CD8-positive, alpha-beta memory T cell (primary cell): ENCODE measurements at regions of chr10 and their contacts with region 1.

Region 1: DNA sequence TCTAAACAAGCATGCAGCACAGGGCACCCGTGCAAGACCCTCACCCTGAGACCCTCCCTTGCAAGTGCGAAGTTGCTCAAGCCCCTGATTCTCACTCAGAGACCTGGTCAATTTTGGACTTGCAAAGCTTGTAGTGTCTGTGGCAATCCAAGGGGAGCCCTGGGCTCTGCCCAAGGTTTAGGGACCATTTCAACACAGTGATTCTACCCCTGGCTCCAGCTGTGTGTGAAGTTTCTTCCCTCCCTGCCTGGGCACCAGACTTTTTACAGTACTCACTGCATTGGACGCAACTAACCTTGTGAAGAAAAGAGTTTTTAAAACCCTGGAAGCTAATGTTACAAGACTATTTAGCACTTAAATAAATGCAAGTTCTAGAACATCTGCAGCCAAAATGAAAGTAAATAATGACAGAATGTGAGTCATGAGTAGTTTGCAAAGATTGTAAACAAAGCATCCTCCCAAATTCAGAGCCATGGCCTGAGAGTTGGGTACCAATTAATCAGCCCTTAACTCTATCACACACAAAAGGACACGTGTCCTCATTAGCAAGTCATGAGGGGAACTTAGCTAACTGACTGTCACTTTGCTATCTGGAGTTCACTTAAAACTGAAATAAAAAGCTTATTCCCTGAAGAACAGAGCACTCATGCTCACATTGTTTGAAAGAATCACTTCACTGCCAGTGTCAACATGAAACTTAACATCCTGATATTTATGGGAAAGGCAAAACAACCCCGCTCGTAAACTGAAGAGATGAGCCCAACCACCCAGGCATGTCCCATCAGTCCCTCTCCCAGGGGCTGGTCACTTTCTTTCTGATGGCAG is 48.1 kb downstream of the RGS10 start:
- DNase-seq: no peak
- H3K4me3 ChIP-seq: no peak overlapping the region
- H3K4me3 Mint-ChIP-seq: peak overlapping the region in 5 of 7 donors; percentile 10 to 52 (median 24)
- H3K27ac ChIP-seq: no peak overlapping the region
- H3K27ac Mint-ChIP-seq: peak overlapping the region; percentile 56 to 94 (median 90)
- H3K4me1 ChIP-seq: peaks cover 51% of the 10 kb centered on the region
- H3K4me1 Mint-ChIP-seq: peaks cover 49 to 71% (median 58%) of the 10 kb centered on the region in 3 donors
- H3K27me3 ChIP-seq: no peaks in the 10 kb centered on the region
- H3K27me3 Mint-ChIP-seq: no peaks in the 10 kb centered on the region

Region 2: GRCh38 chr10:119199231-119199992 is 295.0 kb before region 1 on chr10:
- CTCF ChIA-PET with region 1: interaction called, 12 read pairs
- POLR2A ChIA-PET with region 1: no interaction called
- DNase-seq: peak in 3 of 5 donors; percentile 27 to 59 (median 49)
- H3K4me3 ChIP-seq: no peak overlapping the region
- H3K4me3 Mint-ChIP-seq: no peak overlapping the region
- H3K27ac ChIP-seq: no peak overlapping the region
- H3K27ac Mint-ChIP-seq: no peak overlapping the region
- H3K4me1 ChIP-seq: no peaks in the 10 kb centered on the region
- H3K4me1 Mint-ChIP-seq: peaks cover 0 to 13% (median 2%) of the 10 kb centered on the region in 3 donors
- H3K27me3 ChIP-seq: no peaks in the 10 kb centered on the region
- H3K27me3 Mint-ChIP-seq: peaks cover 3% of the 10 kb centered on the region in 2 donors

Region 3: GRCh38 chr10:119207367-119207668 is 287.1 kb before region 1 on chr10 and contains the start of gene GRK5:
- CTCF ChIA-PET with region 1: interaction called, 16 read pairs
- POLR2A ChIA-PET with region 1: interaction called, 3 read pairs
- DNase-seq: peak; percentile 92 to 98 (median 98)
- H3K4me3 ChIP-seq: peak within 1 kb of the TSS; percentile 78
- H3K4me3 Mint-ChIP-seq: peak within 1 kb of the TSS; percentile 94 to 99 (median 96)
- H3K27ac ChIP-seq: peak within 1 kb of the TSS; percentile 57
- H3K27ac Mint-ChIP-seq: peak within 1 kb of the TSS; percentile 93 to 99 (median 98)
- H3K4me1 ChIP-seq: peaks cover 34% of the 10 kb centered on the region
- H3K4me1 Mint-ChIP-seq: peaks cover 39 to 49% (median 46%) of the 10 kb centered on the region in 3 donors
- H3K27me3 ChIP-seq: no peaks in the 10 kb centered on the region
- H3K27me3 Mint-ChIP-seq: peaks cover 0 to 2% of the 10 kb centered on the region in 2 donors
- total RNA-seq, gene GRK5: 13.6 to 13.8 TPM

Region 4: GRCh38 chr10:119445311-119445934 is 49.0 kb before region 1 on chr10:
- CTCF ChIA-PET with region 1: interaction called, 15 read pairs
- POLR2A ChIA-PET with region 1: no interaction called
- DNase-seq: peak; percentile 71 to 87 (median 78)
- H3K4me3 ChIP-seq: no peak overlapping the region
- H3K4me3 Mint-ChIP-seq: no peak overlapping the region
- H3K27ac ChIP-seq: no peak overlapping the region
- H3K27ac Mint-ChIP-seq: peak overlapping the region in 3 of 8 donors; percentile 32 to 47 (median 36)
- H3K4me1 ChIP-seq: peaks cover 4% of the 10 kb centered on the region
- H3K4me1 Mint-ChIP-seq: peaks cover 8 to 14% (median 9%) of the 10 kb centered on the region in 3 donors
- H3K27me3 ChIP-seq: no peaks in the 10 kb centered on the region
- H3K27me3 Mint-ChIP-seq: no peaks in the 10 kb centered on the region

Region 5: DNA sequence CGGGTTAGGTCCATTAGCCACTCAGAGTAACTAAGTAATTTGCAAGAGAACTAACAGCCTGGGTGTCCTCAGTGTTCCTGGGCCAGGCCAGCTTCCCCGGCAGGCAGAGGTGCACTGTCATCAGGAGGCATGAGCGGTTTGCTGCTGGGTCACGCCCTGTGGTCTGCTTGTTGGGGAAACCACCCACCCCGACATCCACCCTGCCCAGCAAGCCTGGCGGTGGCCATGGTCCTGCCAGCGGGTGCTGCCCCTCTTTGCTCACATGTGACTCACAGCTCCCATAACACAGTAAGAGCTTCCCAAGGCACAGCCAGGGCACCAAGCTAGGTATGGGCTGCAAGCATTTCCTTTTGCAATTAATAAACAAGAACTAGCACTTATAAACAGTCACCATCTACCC is 27.8 kb before region 1 on chr10:
- CTCF ChIA-PET with region 1: interaction called, 11 read pairs
- POLR2A ChIA-PET with region 1: no interaction called
- DNase-seq: peak; percentile 16 to 57 (median 26)
- H3K4me3 ChIP-seq: no peak overlapping the region
- H3K4me3 Mint-ChIP-seq: peak overlapping the region in 1 of 7 donors; percentile 10
- H3K27ac ChIP-seq: no peak overlapping the region
- H3K27ac Mint-ChIP-seq: peak overlapping the region in 2 of 8 donors; percentile 17 to 54
- H3K4me1 ChIP-seq: peaks cover 11% of the 10 kb centered on the region
- H3K4me1 Mint-ChIP-seq: peaks cover 9 to 21% (median 14%) of the 10 kb centered on the region in 3 donors
- H3K27me3 ChIP-seq: no peaks in the 10 kb centered on the region
- H3K27me3 Mint-ChIP-seq: peaks cover 4 to 5% of the 10 kb centered on the region in 2 donors

Region 6: DNA sequence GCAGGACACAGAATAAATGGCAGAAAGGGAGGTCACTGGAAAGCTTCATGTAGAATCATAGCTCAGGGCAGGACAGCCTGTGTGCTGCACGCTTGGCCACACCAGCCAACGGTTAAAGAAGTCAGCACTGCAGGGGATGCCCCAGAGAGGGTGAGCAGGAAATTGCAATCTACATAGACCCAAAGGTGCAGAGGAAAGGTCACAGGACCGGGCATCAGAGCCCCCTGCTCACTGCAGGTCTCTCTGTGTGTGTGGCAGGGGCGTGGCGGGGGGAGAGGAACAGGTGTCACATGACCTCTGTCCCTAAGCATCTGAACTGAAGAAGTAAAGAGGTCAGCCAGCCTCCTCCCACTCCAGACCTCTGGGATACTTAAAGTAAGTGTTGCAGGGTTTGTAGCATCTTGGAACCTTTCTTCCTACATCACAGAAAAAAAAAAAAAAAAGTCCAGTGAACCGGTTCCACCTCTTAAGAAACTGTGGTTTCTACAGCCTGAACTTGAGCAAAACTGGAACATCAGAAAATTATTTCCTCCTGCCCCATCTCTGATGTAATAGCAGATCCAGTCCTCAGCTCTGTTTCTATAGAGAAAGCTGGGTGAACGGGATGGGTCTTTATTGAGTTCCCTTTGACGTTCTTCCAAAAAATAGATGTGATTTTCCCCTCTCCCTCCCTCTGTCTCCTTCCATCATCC is 16.2 kb before region 1 on chr10:
- CTCF ChIA-PET with region 1: interaction called, 10 read pairs
- POLR2A ChIA-PET with region 1: interaction called, 3 read pairs
- DNase-seq: peak in 3 of 5 donors; percentile 5 to 57 (median 19)
- H3K4me3 ChIP-seq: no peak overlapping the region
- H3K4me3 Mint-ChIP-seq: peak overlapping the region; percentile 16 to 80 (median 68)
- H3K27ac ChIP-seq: no peak overlapping the region
- H3K27ac Mint-ChIP-seq: peak overlapping the region; percentile 59 to 91 (median 82)
- H3K4me1 ChIP-seq: peaks cover 28% of the 10 kb centered on the region
- H3K4me1 Mint-ChIP-seq: peaks cover 27 to 37% (median 30%) of the 10 kb centered on the region in 3 donors
- H3K27me3 ChIP-seq: no peaks in the 10 kb centered on the region
- H3K27me3 Mint-ChIP-seq: peaks cover 0 to 2% of the 10 kb centered on the region in 2 donors

Region 7: DNA sequence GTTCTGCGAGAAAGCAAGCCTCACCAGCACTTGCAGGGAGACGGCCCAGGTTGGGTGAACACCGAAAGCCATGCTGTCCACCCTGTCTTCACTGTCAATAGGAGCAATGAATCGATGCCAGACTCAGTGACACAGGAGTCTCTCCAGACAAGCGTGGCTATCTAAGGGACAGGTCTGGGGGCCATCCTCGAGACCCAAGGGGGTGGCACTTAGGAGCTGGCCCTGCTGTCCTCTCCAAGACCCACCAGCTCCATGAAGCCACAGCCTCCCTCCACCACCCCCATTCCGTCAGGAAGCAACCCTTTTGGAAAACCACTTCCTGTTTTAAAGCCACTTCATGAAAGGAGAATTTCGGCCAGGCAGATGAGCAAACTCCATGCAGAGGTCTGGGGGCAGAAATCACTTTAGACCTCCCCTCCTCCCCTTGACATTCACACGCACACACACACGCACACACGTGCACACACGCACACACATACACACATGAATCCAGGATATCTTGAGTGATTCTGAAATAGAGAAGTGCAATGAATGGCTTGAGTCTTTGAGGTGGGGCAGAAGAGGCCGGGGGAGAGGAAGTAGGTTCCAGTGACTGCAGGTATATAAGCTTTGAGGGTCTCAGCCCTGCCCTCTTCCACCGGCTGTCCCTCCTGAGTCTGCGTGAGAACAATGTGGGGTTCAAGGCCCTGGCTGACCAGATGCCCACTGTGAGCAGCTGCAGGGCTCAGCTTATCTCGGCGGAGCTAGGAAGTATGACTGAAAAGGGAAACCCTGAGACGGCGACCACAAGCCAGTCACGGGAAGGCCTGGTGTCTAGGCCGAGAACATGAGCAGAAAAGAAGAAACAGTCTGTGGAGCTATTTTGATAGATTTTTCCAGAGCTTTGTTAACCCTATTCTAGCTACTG is 23.0 kb after region 1 on chr10:
- CTCF ChIA-PET with region 1: interaction called, 10 read pairs
- POLR2A ChIA-PET with region 1: interaction called, 4 read pairs
- DNase-seq: peak in 4 of 5 donors; percentile 18 to 69 (median 49)
- H3K4me3 ChIP-seq: peak overlapping the region; percentile 40
- H3K4me3 Mint-ChIP-seq: peak overlapping the region; percentile 62 to 89 (median 76)
- H3K27ac ChIP-seq: peak overlapping the region; percentile 58
- H3K27ac Mint-ChIP-seq: peak overlapping the region; percentile 90 to 98 (median 96)
- H3K4me1 ChIP-seq: peaks cover 60% of the 10 kb centered on the region
- H3K4me1 Mint-ChIP-seq: peaks cover 42 to 60% (median 55%) of the 10 kb centered on the region in 3 donors
- H3K27me3 ChIP-seq: no peaks in the 10 kb centered on the region
- H3K27me3 Mint-ChIP-seq: no peaks in the 10 kb centered on the region

Region 8: DNA sequence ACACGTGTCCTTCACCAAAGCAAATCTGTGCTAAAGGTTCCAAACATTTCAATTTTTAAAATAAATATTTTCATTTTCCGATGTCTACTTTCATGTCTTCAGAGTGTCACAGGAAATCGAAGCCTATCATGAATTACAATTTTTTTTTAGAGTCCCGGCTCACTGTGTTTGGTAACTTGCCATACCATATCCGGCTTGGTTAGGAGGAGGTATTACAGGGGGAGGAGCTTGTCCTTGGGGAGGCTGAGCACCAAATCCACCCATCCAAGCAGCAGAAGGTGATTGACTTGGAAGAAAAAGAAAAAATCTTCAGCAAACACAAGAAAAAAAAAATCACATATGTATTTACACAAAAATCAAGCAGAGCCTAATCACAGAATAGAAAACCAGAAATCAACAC is 81.1 kb after region 1 on chr10:
- CTCF ChIA-PET with region 1: no interaction called
- POLR2A ChIA-PET with region 1: no interaction called
- DNase-seq: peak in 3 of 5 donors; percentile 23 to 58 (median 57)
- H3K4me3 ChIP-seq: no peak overlapping the region
- H3K4me3 Mint-ChIP-seq: peak overlapping the region in 3 of 7 donors; percentile 20 to 72 (median 57)
- H3K27ac ChIP-seq: no peak overlapping the region
- H3K27ac Mint-ChIP-seq: peak overlapping the region; percentile 37 to 94 (median 84)
- H3K4me1 ChIP-seq: peaks cover 21% of the 10 kb centered on the region
- H3K4me1 Mint-ChIP-seq: peaks cover 21 to 27% (median 27%) of the 10 kb centered on the region in 3 donors
- H3K27me3 ChIP-seq: no peaks in the 10 kb centered on the region
- H3K27me3 Mint-ChIP-seq: no peaks in the 10 kb centered on the region

Region 9: GRCh38 chr10:120041807-120042559 is 547.5 kb after region 1 on chr10:
- CTCF ChIA-PET with region 1: no interaction called
- POLR2A ChIA-PET with region 1: no interaction called
- DNase-seq: no peak
- H3K4me3 ChIP-seq: no peak overlapping the region
- H3K4me3 Mint-ChIP-seq: no peak overlapping the region
- H3K27ac ChIP-seq: no peak overlapping the region
- H3K27ac Mint-ChIP-seq: no peak overlapping the region
- H3K4me1 ChIP-seq: no peaks in the 10 kb centered on the region
- H3K4me1 Mint-ChIP-seq: no peaks in the 10 kb centered on the region
- H3K27me3 ChIP-seq: no peaks in the 10 kb centered on the region
- H3K27me3 Mint-ChIP-seq: peaks cover 3 to 5% of the 10 kb centered on the region in 2 donors

Region 10: GRCh38 chr10:120688928-120689327 is 1194.5 kb after region 1 on chr10:
- CTCF ChIA-PET with region 1: no interaction called
- POLR2A ChIA-PET with region 1: no interaction called
- DNase-seq: no peak
- H3K4me3 ChIP-seq: no peak overlapping the region
- H3K4me3 Mint-ChIP-seq: no peak overlapping the region
- H3K27ac ChIP-seq: no peak overlapping the region
- H3K27ac Mint-ChIP-seq: peak overlapping the region in 1 of 8 donors; percentile 23
- H3K4me1 ChIP-seq: no peaks in the 10 kb centered on the region
- H3K4me1 Mint-ChIP-seq: peaks cover 16 to 40% (median 29%) of the 10 kb centered on the region in 3 donors
- H3K27me3 ChIP-seq: no peaks in the 10 kb centered on the region
- H3K27me3 Mint-ChIP-seq: peaks cover 0 to 4% of the 10 kb centered on the region in 2 donors